ENCODE measurements at regions of chr2 and their contacts with region 1.

Region 1: DNA sequence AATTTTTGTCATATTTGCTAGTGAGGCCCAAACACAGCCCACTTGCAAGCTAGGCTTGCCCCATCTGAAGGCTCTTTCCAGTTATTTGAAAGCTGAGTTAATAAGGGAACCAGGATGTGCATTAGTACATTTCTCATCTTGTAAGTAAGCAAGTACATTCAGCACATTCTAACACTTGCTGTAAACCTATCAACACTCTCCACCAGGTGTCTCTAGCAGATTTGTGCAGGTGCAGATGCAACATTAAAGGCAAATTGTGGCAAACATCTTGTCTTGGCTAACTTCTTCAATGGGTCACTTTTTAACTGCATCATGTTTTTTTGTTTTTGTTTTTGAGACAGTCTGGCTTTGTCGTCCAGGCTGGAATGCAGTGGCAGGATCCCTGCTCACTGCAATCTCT is 25.3 kb upstream of the MFSD6 start:
- DNase-seq: no peak
- H3K4me3 ChIP-seq: no peak overlapping the region
- H3K27ac ChIP-seq: no peak overlapping the region
- H3K4me1 ChIP-seq: no peaks in the 10 kb centered on the region
- H3K27me3 ChIP-seq: no peaks in the 10 kb centered on the region
- CTCF ChIP-seq: peak; percentile 50 to 84 (median 61)
- EP300 ChIP-seq: no peak
- POLR2A ChIP-seq: no peak

Region 2: DNA sequence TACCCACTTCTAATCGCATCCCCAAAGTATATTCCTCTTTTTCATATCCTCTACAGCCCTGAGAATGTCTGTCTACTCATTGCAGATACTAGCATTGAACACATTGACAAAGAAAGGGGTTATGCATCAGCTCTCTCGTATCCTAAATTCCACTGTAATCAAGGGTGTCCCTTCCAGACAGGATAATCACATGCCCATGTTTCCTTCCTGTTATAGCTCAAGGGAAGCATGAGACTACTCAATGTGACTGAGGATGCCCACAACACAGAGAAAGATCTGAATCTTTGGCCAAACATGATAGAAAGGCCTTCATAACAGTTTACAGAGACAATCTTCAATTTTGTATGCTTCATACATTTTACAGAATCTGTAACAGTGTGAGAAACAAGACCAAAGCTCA is 132.4 kb before region 1 on chr2:
- in situ Hi-C with region 1: no loop called
- intact Hi-C with region 1: no loop called
- DNase-seq: no peak
- H3K4me3 ChIP-seq: no peak overlapping the region
- H3K27ac ChIP-seq: no peak overlapping the region
- H3K4me1 ChIP-seq: no peaks in the 10 kb centered on the region
- H3K27me3 ChIP-seq: no peaks in the 10 kb centered on the region
- CTCF ChIP-seq: no peak
- EP300 ChIP-seq: no peak
- POLR2A ChIP-seq: no peak

Region 3: GRCh38 chr2:190511104-190511503 is 128.3 kb after region 1 on chr2:
- in situ Hi-C with region 1: loop called in 2 of 4 experiments (anchors 10 to 25 kb)
- intact Hi-C with region 1: no loop called
- DNase-seq: no peak
- H3K4me3 ChIP-seq: no peak overlapping the region
- H3K27ac ChIP-seq: peak overlapping the region in 1 of 4 donors; percentile 74
- H3K4me1 ChIP-seq: peaks cover 0 to 28% (median 22%) of the 10 kb centered on the region in 4 donors
- H3K27me3 ChIP-seq: no peaks in the 10 kb centered on the region
- CTCF ChIP-seq: peak; percentile 24 to 65 (median 48)
- EP300 ChIP-seq: no peak
- POLR2A ChIP-seq: no peak

Region 4: GRCh38 chr2:190648289-190649034 is 265.6 kb after region 1 on chr2:
- in situ Hi-C with region 1: loop called in 1 of 4 experiments (anchors 25 kb)
- intact Hi-C with region 1: no loop called
- DNase-seq: peak; percentile 89
- H3K4me3 ChIP-seq: peak overlapping the region; percentile 63 to 90 (median 78)
- H3K27ac ChIP-seq: peak overlapping the region; percentile 93 to 99 (median 96)
- H3K4me1 ChIP-seq: peaks cover 3 to 33% (median 17%) of the 10 kb centered on the region in 4 donors
- H3K27me3 ChIP-seq: no peaks in the 10 kb centered on the region
- CTCF ChIP-seq: no peak
- EP300 ChIP-seq: peak; percentile 1
- POLR2A ChIP-seq: peak; percentile 62

Region 5: GRCh38 chr2:190679813-190680591 is 297.2 kb after region 1 on chr2:
- in situ Hi-C with region 1: loop called in 1 of 4 experiments (anchors 25 kb)
- intact Hi-C with region 1: no loop called
- DNase-seq: peak; percentile 73
- H3K4me3 ChIP-seq: no peak overlapping the region
- H3K27ac ChIP-seq: peak overlapping the region in 2 of 4 donors; percentile 8 to 26
- H3K4me1 ChIP-seq: peaks cover 0 to 14% (median 0%) of the 10 kb centered on the region in 4 donors
- H3K27me3 ChIP-seq: no peaks in the 10 kb centered on the region
- CTCF ChIP-seq: peak; percentile 55 to 58 (median 57)
- EP300 ChIP-seq: no peak
- POLR2A ChIP-seq: no peak

Region 6: DNA sequence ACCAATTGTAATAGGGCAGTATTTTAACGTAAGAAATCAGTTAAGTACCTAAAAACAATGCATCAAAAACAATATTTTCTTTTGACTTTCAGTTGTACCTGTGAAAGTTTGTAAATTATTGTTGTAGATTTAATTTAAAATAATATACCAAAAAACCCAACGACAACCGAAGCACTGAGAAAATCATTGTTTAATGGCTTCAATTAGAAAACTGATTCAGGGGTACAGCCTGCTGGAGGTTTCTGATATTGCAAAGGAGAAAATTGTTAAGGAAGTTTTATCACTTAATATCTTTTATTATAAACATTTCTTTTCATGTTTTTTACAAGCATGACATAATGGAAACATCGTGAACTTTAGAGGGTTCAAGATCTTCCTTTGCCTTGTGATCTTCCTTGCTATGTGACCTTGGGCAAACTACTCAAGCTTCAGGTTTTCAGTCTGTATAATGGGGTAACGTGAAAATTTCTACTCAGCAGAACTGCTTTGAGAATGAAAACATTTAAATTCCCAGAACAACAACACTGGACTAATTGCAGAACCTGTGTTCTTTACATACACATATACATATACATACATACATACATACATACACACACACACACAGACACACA is 421.4 kb after region 1 on chr2:
- in situ Hi-C with region 1: loop called in 1 of 4 experiments (anchors 25 kb)
- intact Hi-C with region 1: no loop called
- DNase-seq: no peak
- H3K4me3 ChIP-seq: no peak overlapping the region
- H3K27ac ChIP-seq: no peak overlapping the region
- H3K4me1 ChIP-seq: peaks cover under 1 to 8% (median 2%) of the 10 kb centered on the region in 4 donors
- H3K27me3 ChIP-seq: no peaks in the 10 kb centered on the region
- CTCF ChIP-seq: peak; percentile 47 to 64 (median 48)
- EP300 ChIP-seq: no peak
- POLR2A ChIP-seq: no peak